ENCODE measurements at regions of chr20 and their contacts with region 1.

Region 1: DNA sequence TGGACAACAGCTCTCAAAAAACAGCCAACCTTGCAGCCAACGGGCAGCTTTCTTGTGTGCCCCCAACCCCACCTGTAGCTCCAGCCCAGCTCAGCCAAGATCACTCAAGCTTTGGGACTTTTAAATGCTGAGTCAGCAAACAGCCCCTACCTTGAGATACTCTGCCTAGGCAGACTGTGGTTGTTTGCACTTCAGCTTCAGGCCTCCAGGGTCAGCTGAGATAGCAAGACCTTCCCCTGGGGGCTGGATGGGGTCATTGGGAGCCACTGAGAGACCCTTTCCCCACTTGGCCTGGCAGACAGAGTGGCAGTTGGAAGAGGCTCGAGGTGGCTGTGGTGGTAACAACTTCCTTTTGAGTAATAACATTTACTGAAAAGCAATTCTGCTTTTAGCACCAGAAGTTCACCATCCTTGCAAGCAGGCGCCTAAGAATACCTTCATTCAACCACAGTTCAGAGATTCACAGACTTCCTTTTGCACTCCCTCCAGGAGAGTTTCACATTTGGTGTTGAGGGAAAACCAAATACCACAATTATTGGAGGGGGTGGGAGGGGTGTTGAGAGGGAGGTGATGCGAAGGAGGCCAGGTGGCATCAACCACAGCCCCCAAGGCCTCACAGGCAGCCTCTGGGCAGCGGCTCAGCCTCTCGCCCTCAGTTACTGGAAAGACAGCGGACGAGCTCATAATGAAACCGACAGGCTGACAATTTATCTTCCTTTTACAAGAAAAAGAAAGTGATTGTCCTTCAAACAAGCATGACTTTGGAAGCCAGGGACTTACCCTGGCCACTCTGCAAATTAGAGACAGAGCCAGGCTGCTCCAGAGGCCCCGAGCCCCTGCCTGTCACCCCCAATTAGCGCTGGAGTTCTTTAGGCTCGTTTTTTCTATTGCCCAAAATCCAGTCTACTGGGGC is 148.1 kb downstream of the CEBPB start:
- DNase-seq: peak; percentile 88
- H3K4me3 Mint-ChIP-seq: peak overlapping the region; percentile 53
- H3K27ac Mint-ChIP-seq: peak overlapping the region; percentile 92
- H3K4me1 Mint-ChIP-seq: peaks cover 36% of the 10 kb centered on the region
- H3K27me3 Mint-ChIP-seq: no peaks in the 10 kb centered on the region

Region 2: GRCh38 chr20:50381888-50382593 is 43.3 kb after region 1 on chr20:
- CTCF ChIA-PET with region 1: interaction called, 3 read pairs
- intact Hi-C with region 1: loop called (anchors 1 kb)
- DNase-seq: peak; percentile 55
- H3K4me3 Mint-ChIP-seq: peak overlapping the region; percentile 34
- H3K27ac Mint-ChIP-seq: peak overlapping the region; percentile 75
- H3K4me1 Mint-ChIP-seq: peaks cover 46% of the 10 kb centered on the region
- H3K27me3 Mint-ChIP-seq: no peaks in the 10 kb centered on the region

Region 3: GRCh38 chr20:50509935-50510705 is 171.4 kb after region 1 on chr20 and contains the start of gene PTPN1:
- CTCF ChIA-PET with region 1: no interaction called
- intact Hi-C with region 1: no loop called
- DNase-seq: peak; percentile 99
- H3K4me3 Mint-ChIP-seq: peak within 1 kb of the TSS; percentile 100
- H3K27ac Mint-ChIP-seq: peak within 1 kb of the TSS; percentile 93
- H3K4me1 Mint-ChIP-seq: peaks cover 37% of the 10 kb centered on the region
- H3K27me3 Mint-ChIP-seq: no peaks in the 10 kb centered on the region
- total RNA-seq, gene PTPN1: 111 to 119 TPM

Region 4: GRCh38 chr20:50569864-50570836 is 231.4 kb after region 1 on chr20:
- CTCF ChIA-PET with region 1: no interaction called
- intact Hi-C with region 1: loop called (anchors 1 kb)
- DNase-seq: peak; percentile 83
- H3K4me3 Mint-ChIP-seq: peak overlapping the region; percentile 23
- H3K27ac Mint-ChIP-seq: peak overlapping the region; percentile 91
- H3K4me1 Mint-ChIP-seq: peaks cover 84% of the 10 kb centered on the region
- H3K27me3 Mint-ChIP-seq: no peaks in the 10 kb centered on the region

Measured in activated naive CD4-positive, alpha-beta T cell treated with anti-CD3 and anti-CD28 coated beads for 36 hours (primary cell).